ENCODE measurements at regions of chr1 and their contacts with region 1.

Region 1: DNA sequence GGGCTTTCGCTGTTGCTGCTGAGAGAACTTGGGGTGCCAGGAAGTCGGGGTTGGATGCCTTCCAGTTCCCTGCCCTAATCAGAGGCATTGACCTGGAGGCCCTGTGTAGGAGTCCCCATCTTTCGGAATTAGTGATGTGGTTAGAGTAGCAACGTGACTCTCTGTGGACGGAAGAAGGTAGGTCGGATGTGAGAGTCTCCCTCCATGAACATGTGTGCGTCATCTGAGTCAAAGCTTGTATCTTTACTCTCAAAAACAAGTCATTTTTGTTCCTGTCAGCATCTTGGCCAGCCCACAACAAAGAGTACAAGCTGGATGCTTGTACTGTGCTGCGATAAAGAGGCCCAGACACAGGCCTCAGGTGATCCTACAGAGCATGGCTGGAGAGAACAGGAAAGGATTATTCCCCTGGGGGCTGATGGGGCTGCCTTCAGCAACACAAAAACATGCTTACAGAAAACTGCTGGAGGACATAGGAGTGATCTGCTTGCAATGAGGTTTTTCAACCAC is 31.0 kb upstream of the IL10 start:
- DNase-seq: peak; percentile 92
- H3K4me3 Mint-ChIP-seq: no peak overlapping the region
- H3K27ac Mint-ChIP-seq: peak overlapping the region; percentile 82
- H3K4me1 Mint-ChIP-seq: peaks cover 59% of the 10 kb centered on the region
- H3K27me3 Mint-ChIP-seq: peaks cover 7% of the 10 kb centered on the region

Region 2: DNA sequence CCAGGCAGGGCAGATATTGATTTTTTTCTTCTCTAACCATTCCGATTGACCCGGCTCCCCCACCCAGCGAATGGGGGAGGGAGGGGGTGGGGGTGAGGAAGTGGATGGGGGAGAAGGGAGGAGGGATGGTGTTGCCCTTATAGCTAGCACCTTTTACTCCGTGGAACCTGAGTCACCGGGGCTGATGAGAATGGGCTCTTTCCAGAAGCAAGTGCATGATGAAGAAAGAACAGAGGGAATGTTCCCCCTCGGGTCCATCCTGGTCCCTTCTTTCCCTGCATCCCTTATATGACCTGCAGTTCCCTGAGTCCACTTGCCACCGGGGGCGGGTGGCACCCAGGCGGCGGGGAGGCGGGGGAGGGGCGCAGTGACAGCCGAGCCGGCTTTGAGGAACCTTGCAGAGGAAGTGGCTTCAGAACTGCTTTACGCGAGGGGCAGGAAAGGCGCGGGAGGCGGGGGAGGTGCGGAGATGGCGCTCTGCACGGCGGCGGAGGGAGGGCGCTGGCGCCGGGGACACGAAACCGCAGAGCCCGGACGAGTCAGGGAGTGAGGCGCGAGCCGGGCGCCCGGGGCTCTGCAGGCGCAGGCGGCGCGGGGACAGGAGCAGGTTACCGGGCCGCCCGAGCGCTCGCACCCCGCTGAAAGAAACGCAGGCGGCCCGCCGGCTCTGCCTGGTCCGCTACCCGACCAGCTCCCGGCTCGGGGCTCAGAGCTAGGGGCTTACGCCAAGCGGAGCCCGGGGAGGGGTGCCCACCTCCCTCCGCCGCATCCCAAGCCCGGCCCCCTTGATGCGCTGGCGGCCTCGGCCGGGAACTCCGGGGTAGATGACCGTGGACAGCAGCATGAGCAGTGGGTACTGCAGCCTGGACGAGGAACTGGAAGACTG is 246.3 kb before region 1 on chr1:
- CTCF ChIA-PET with region 1: no interaction called
- intact Hi-C with region 1: loop called (anchors 1 kb)
- DNase-seq: peak; percentile 92
- H3K4me3 Mint-ChIP-seq: peak overlapping the region; percentile 96
- H3K27ac Mint-ChIP-seq: peak overlapping the region; percentile 100
- H3K4me1 Mint-ChIP-seq: peaks cover 61% of the 10 kb centered on the region
- H3K27me3 Mint-ChIP-seq: no peaks in the 10 kb centered on the region

Region 3: DNA sequence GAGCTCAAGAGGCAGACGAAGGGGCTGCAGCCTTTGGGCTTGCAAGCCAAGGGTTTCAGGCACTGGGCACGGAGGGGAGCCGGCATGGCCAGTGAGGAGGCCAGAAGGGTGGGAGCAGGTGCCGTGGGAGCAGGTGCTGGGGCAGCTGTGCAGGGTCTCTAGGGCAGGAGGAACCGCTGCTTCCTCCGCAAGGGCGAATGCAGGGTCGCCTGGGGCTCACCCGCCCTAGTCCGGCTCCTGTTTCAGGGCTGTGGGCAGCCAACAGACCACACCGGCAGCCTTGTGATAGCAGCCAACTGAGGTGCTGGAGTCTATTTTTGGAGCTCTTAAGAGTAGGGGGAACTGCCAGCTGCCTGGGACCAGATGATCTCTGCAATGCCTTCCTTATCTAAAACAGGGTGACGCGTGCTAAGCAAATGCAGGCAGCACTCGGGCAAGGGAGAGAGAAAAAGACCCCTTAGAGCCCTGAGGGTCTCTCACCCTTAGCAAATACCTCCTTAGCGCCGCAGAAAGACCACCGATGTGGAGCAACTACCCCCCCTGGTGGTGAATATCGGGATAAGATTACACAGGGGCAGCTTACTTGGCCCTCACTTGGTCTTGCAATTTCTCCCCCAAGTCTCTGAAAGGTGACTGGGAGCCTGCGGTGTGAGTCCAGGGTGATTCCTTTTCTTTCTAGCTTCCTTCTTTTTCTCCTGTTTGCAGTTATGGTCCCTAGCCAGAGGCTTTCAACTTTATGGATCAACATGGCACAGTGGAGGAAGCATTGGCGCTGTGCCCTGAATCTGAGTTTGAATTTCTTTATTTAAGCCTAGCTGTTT is 139.2 kb before region 1 on chr1:
- CTCF ChIA-PET with region 1: interaction called, 23 read pairs
- intact Hi-C with region 1: loop called (anchors 1 kb)
- DNase-seq: peak; percentile 87
- H3K4me3 Mint-ChIP-seq: peak overlapping the region; percentile 10
- H3K27ac Mint-ChIP-seq: no peak overlapping the region
- H3K4me1 Mint-ChIP-seq: peaks cover 38% of the 10 kb centered on the region
- H3K27me3 Mint-ChIP-seq: peaks cover 18% of the 10 kb centered on the region

Region 4: GRCh38 chr1:206684478-206685333 is 118.6 kb before region 1 on chr1 and contains the start of gene MAPKAPK2:
- CTCF ChIA-PET with region 1: no interaction called
- intact Hi-C with region 1: no loop called
- DNase-seq: peak; percentile 75
- H3K4me3 Mint-ChIP-seq: peak within 1 kb of the TSS; percentile 88
- H3K27ac Mint-ChIP-seq: peak within 1 kb of the TSS; percentile 91
- H3K4me1 Mint-ChIP-seq: peaks cover 52% of the 10 kb centered on the region
- H3K27me3 Mint-ChIP-seq: peaks cover 2% of the 10 kb centered on the region
- total RNA-seq, gene MAPKAPK2: 83.4 to 85.3 TPM

Region 5: GRCh38 chr1:206761159-206761768 is 42.0 kb before region 1 on chr1:
- CTCF ChIA-PET with region 1: interaction called, 6 read pairs
- intact Hi-C with region 1: loop called (anchors 1 kb)
- DNase-seq: no peak
- H3K4me3 Mint-ChIP-seq: no peak overlapping the region
- H3K27ac Mint-ChIP-seq: no peak overlapping the region
- H3K4me1 Mint-ChIP-seq: peaks cover 22% of the 10 kb centered on the region
- H3K27me3 Mint-ChIP-seq: no peaks in the 10 kb centered on the region

Region 6: GRCh38 chr1:206814716-206815341 is 11.6 kb after region 1 on chr1:
- CTCF ChIA-PET with region 1: interaction called, 12 read pairs
- intact Hi-C with region 1: loop called (anchors 1 kb)
- DNase-seq: no peak
- H3K4me3 Mint-ChIP-seq: no peak overlapping the region
- H3K27ac Mint-ChIP-seq: no peak overlapping the region
- H3K4me1 Mint-ChIP-seq: peaks cover 21% of the 10 kb centered on the region
- H3K27me3 Mint-ChIP-seq: no peaks in the 10 kb centered on the region

Region 7: GRCh38 chr1:207097871-207098324 is 294.6 kb after region 1 on chr1:
- CTCF ChIA-PET with region 1: no interaction called
- intact Hi-C with region 1: loop called (anchors 1 kb)
- DNase-seq: peak; percentile 65
- H3K4me3 Mint-ChIP-seq: no peak overlapping the region
- H3K27ac Mint-ChIP-seq: peak overlapping the region; percentile 86
- H3K4me1 Mint-ChIP-seq: peaks cover 9% of the 10 kb centered on the region
- H3K27me3 Mint-ChIP-seq: peaks cover 4% of the 10 kb centered on the region

Measured in activated naive CD4-positive, alpha-beta T cell treated with anti-CD3 and anti-CD28 coated beads for 36 hours (primary cell).